Breast epithelium (tissue), 4 donors: ENCODE measurements at regions of chr18 and their contacts with region 1.

Region 1: GRCh38 chr18:42437646-42438045 is 482.6 kb downstream of the PIK3C3 start:
- DNase-seq: no peak
- H3K4me3 ChIP-seq: no peak overlapping the region
- H3K27ac ChIP-seq: no peak overlapping the region
- H3K4me1 ChIP-seq: no peaks in the 10 kb centered on the region
- H3K27me3 ChIP-seq: no peaks in the 10 kb centered on the region
- CTCF ChIP-seq: no peak
- POLR2A ChIP-seq: no peak

Region 2: GRCh38 chr18:40810371-40810770 is 1627.3 kb before region 1 on chr18:
- intact Hi-C with region 1: loop called (anchors 10 kb)
- DNase-seq: no peak
- H3K4me3 ChIP-seq: no peak overlapping the region
- H3K27ac ChIP-seq: no peak overlapping the region
- H3K4me1 ChIP-seq: no peaks in the 10 kb centered on the region
- H3K27me3 ChIP-seq: no peaks in the 10 kb centered on the region
- CTCF ChIP-seq: no peak
- POLR2A ChIP-seq: no peak

Region 3: GRCh38 chr18:42028247-42028832 is 409.3 kb before region 1 on chr18:
- intact Hi-C with region 1: no loop called
- DNase-seq: no peak
- H3K4me3 ChIP-seq: no peak overlapping the region
- H3K27ac ChIP-seq: no peak overlapping the region
- H3K4me1 ChIP-seq: no peaks in the 10 kb centered on the region
- H3K27me3 ChIP-seq: no peaks in the 10 kb centered on the region
- CTCF ChIP-seq: peak; percentile 33 to 47 (median 37)
- POLR2A ChIP-seq: no peak

Region 4: DNA sequence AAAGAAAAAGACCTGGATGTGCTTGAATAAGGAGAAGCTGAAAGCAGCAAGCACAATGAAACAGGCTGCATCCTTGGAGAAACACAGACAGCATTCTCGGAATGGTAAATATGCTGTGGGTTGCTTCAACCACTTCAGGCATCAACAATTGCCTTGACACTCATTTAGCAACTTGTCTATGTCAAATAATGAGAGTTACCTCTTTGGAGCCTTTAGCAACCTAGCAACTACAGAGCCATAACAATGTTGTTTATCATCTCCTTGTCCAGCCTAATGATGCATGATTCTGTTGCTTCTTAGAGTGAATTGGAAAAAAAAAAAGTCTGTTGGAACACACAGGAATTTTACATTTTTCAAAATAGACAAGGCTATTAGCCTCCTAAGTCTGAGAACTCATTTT is 72.1 kb before region 1 on chr18:
- intact Hi-C with region 1: no loop called
- DNase-seq: no peak
- H3K4me3 ChIP-seq: no peak overlapping the region
- H3K27ac ChIP-seq: no peak overlapping the region
- H3K4me1 ChIP-seq: no peaks in the 10 kb centered on the region
- H3K27me3 ChIP-seq: no peaks in the 10 kb centered on the region
- CTCF ChIP-seq: no peak
- POLR2A ChIP-seq: no peak